WTC11 (cell line): ENCODE measurements at regions of chr17 and their contacts with region 1.

Region 1: DNA sequence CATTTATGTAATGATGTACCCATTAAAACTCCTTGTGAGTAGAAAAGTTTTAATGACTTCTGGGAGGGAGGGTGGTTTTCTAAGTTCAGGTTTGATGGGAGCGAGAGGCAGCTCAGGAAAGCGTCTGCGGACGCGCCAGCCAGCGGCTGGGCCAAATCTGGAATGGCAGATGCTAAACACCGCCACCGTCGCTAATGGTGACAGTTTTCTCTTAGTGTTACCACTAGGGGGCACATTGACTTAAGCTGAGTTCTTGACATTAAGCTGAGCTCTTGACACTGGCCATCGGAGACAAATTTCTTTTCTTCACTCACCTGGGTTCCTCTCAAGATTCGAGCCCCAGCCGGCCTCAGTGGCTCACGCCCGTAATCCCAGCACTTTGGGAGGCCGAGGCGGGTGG is 6.7 kb downstream of the TRPV1 start:
- DNase-seq: peak; percentile 56
- ATAC-seq: peak; percentile 83
- H3K4me3 Mint-ChIP-seq: no peak overlapping the region
- H3K27ac Mint-ChIP-seq: no peak overlapping the region
- H3K4me1 Mint-ChIP-seq: no peaks in the 10 kb centered on the region
- H3K27me3 Mint-ChIP-seq: no peaks in the 10 kb centered on the region; the same call in 1 of the 2 replicates
- CTCF ChIP-seq: peak; percentile 54

Region 2: GRCh38 chr17:3535253-3535995 is 67.1 kb before region 1 on chr17:
- CTCF ChIA-PET with region 1: interaction called, 15 read pairs
- POLR2A ChIA-PET with region 1: no interaction called
- DNase-seq: peak; percentile 81
- ATAC-seq: peak; percentile 88
- H3K4me3 Mint-ChIP-seq: peak overlapping the region; percentile 67
- H3K27ac Mint-ChIP-seq: no peak overlapping the region
- H3K4me1 Mint-ChIP-seq: peaks cover 15% of the 10 kb centered on the region
- H3K27me3 Mint-ChIP-seq: peaks cover 3% of the 10 kb centered on the region; the same call in 1 of the 2 replicates
- CTCF ChIP-seq: no peak

Region 3: GRCh38 chr17:3636154-3636907 is 33.8 kb after region 1 on chr17 and contains the starts of genes CTNS and SHPK:
- CTCF ChIA-PET with region 1: interaction called, 23 read pairs
- POLR2A ChIA-PET with region 1: interaction called, 4 read pairs
- DNase-seq: peak; percentile 97
- ATAC-seq: peak; percentile 97
- H3K4me3 Mint-ChIP-seq: peak within 1 kb of the TSS; percentile 97
- H3K27ac Mint-ChIP-seq: peak within 1 kb of the TSS; percentile 100
- H3K4me1 Mint-ChIP-seq: peaks cover 27% of the 10 kb centered on the region
- H3K27me3 Mint-ChIP-seq: no peaks in the 10 kb centered on the region
- CTCF ChIP-seq: no peak
- total RNA-seq, gene CTNS: 10.7 to 11.9 TPM (median 11.8 TPM) in 3 replicates
- total RNA-seq, gene SHPK: 29.0 to 29.3 TPM (median 29.2 TPM) in 3 replicates

Region 4: DNA sequence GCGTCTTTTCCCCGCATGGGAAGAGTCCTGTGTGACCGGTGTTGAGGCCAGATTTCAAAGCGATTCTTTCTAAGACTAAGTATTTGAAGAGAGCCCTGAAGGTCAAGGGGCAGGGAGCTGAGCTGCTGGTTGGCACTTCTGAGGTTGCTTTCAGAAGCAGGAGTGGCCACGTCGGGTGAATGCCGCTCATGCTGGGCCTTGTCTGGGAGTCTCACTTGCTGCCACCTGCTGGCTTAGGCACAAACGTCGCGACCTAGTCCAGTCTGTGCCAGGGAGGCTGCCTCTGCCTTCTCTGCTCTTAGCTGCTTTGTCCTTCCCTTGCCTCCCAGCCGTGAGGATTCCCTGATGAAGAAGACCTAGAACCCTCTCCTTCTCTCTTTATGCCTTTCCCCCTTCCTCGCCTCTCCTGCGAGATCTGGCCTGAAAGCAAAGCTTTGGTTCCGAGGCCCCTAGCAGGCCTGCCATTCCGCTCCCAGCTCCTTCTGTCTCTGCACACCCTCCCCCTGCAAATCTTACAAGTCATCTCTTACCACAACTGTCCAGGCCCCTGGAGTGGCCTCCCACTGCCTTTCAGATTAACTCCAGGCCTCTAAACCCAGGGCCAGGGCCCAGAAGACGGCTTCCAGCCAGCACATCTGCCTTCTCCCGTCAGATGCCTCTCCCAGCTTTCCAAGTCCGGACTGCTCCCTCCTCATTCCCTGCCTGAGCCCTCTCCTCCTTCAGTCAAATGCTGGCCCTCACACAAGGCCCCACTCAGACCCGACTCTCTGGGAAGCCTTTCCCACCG is 45.5 kb after region 1 on chr17:
- CTCF ChIA-PET with region 1: interaction called, 17 read pairs
- POLR2A ChIA-PET with region 1: no interaction called
- DNase-seq: peak; percentile 58
- ATAC-seq: peak; percentile 93
- H3K4me3 Mint-ChIP-seq: no peak overlapping the region
- H3K27ac Mint-ChIP-seq: peak overlapping the region; percentile 17; the same call in 1 of the 2 replicates
- H3K4me1 Mint-ChIP-seq: no peaks in the 10 kb centered on the region
- H3K27me3 Mint-ChIP-seq: no peaks in the 10 kb centered on the region
- CTCF ChIP-seq: no peak